WTC11 (cell line): ENCODE measurements at regions of chr10 and their contacts with region 1.

Region 1: DNA sequence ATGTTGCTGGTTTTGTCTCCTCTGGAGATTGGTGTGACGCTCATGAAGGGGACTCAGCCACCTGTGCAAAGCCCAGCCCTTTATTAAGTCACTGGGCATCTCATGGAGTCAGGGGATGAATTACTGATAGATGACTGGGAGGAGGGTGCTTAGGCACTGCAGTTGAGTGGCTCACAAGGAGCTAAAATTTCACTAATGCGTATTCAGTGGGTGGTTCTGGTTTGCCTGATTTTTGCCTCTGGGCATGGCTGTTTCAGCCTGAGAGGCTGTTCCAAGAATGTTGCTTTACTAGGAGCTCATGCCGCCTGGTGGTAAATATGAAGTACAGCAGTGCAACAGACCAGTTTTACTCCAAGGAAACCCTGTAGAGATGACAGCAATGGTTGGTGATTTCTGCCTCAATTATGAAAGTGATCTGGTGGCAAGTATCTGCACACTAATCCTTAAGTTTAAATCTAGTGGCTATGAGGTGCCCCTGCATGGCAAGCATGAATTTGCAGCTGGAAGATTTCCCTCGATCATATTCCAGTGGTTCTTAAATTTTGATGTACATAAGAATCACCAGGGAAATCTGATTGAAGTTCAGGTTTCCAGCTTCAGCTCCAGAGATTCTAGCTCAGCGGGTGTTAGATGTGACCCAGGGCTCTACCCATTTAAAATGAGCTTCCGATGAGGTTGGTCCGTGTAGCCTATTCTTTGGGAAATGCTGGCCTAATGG is 19.9 kb downstream of the ACTA2 start:
- DNase-seq: peak; percentile 53
- ATAC-seq: peak; percentile 88
- H3K4me3 Mint-ChIP-seq: no peak overlapping the region
- H3K27ac Mint-ChIP-seq: peak overlapping the region; percentile 79; the same call in 1 of the 2 replicates
- H3K4me1 Mint-ChIP-seq: peaks cover 13% of the 10 kb centered on the region
- H3K27me3 Mint-ChIP-seq: no peaks in the 10 kb centered on the region
- CTCF ChIP-seq: peak; percentile 75

Region 2: GRCh38 chr10:88835096-88835909 is 97.4 kb before region 1 on chr10:
- CTCF ChIA-PET with region 1: interaction called, 84 read pairs
- POLR2A ChIA-PET with region 1: no interaction called
- DNase-seq: peak; percentile 81
- ATAC-seq: peak; percentile 93
- H3K4me3 Mint-ChIP-seq: no peak overlapping the region
- H3K27ac Mint-ChIP-seq: no peak overlapping the region
- H3K4me1 Mint-ChIP-seq: no peaks in the 10 kb centered on the region
- H3K27me3 Mint-ChIP-seq: no peaks in the 10 kb centered on the region; the same call in 1 of the 2 replicates
- CTCF ChIP-seq: peak; percentile 70

Region 3: DNA sequence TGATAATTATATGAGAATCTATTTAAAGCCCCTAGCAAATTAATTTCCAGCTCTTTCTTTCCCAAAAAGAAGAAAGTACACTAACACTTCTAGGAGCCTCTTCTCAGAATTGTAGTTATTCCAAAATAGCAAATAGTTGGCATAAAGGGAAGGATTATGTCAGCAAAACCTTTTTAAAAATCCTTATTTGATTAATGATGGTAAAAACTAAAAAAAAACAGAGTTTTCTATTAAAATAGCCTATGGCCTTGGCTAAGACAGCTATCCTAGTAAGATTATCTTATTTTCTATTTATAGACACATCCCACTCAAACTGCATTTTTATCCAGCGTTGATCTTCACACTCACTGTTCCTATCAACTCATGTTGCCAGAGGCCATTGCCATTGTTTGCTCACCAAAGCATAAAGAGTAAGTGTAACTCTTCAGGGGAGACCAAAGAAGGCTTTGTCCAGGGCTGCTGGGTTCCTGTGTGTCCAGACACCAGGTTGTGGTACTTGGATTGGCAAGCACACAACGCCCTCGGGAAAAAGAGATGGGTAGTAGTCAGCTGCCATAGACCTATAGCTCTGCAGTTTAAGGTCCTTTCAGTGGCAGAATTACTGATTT is 11.6 kb before region 1 on chr10:
- CTCF ChIA-PET with region 1: interaction called, 13 read pairs
- POLR2A ChIA-PET with region 1: no interaction called
- DNase-seq: no peak
- ATAC-seq: no peak
- H3K4me3 Mint-ChIP-seq: no peak overlapping the region
- H3K27ac Mint-ChIP-seq: no peak overlapping the region
- H3K4me1 Mint-ChIP-seq: no peaks in the 10 kb centered on the region; the same call in 1 of the 2 replicates
- H3K27me3 Mint-ChIP-seq: no peaks in the 10 kb centered on the region
- CTCF ChIP-seq: no peak

Region 4: GRCh38 chr10:88990384-88991160 is 57.9 kb after region 1 on chr10 and contains the start of gene FAS:
- CTCF ChIA-PET with region 1: interaction called, 58 read pairs
- POLR2A ChIA-PET with region 1: interaction called, 3 read pairs
- DNase-seq: peak; percentile 51
- ATAC-seq: peak; percentile 76
- H3K4me3 Mint-ChIP-seq: peak within 1 kb of the TSS; percentile 88
- H3K27ac Mint-ChIP-seq: no peak within 1 kb of the TSS
- H3K4me1 Mint-ChIP-seq: peaks cover 31% of the 10 kb centered on the region
- H3K27me3 Mint-ChIP-seq: peaks cover 36% of the 10 kb centered on the region
- CTCF ChIP-seq: no peak
- total RNA-seq, gene FAS: 2.1 to 4.1 TPM (median 3.3 TPM) in 3 replicates

Region 5: GRCh38 chr10:89053555-89053954 is 120.9 kb after region 1 on chr10:
- CTCF ChIA-PET with region 1: no interaction called
- POLR2A ChIA-PET with region 1: no interaction called
- DNase-seq: no peak
- ATAC-seq: no peak
- H3K4me3 Mint-ChIP-seq: no peak overlapping the region
- H3K27ac Mint-ChIP-seq: no peak overlapping the region
- H3K4me1 Mint-ChIP-seq: peaks cover 11% of the 10 kb centered on the region
- H3K27me3 Mint-ChIP-seq: no peaks in the 10 kb centered on the region; the same call in 1 of the 2 replicates
- CTCF ChIP-seq: no peak

Region 6: DNA sequence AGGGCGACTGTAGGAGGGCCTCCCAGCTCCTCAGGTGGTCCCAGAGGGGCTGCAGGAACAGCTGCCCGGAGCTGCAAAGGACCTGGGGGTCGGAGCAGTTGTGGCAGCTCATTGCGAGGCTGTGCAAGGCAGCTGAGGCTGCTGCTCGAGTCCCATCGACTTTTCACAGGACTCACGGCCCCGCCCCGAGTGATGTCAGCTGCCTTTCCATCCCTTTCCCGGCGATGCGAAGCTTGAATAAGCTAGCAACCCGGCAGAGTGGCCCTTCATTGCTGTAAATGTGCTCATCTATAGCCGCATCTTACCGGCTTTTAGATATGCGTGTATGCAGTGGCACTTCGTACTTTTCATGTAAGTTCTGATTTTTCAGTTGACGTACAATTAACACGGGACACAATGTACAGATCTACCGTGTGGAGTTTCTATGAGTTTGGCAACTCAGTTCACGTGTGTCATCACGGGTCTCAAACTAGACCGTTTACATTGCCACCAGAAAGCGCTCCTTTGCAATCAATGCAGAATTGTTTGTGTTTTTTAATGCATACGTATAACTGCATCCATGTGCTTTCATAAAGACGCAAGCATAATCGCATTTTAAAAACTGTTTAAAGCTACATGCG is 274.6 kb after region 1 on chr10 and contains the start of gene CH25H:
- CTCF ChIA-PET with region 1: interaction called, 17 read pairs
- POLR2A ChIA-PET with region 1: no interaction called
- DNase-seq: peak; percentile 62
- ATAC-seq: peak; percentile 66
- H3K4me3 Mint-ChIP-seq: peak within 1 kb of the TSS; percentile 74
- H3K27ac Mint-ChIP-seq: no peak within 1 kb of the TSS
- H3K4me1 Mint-ChIP-seq: peaks cover 20% of the 10 kb centered on the region
- H3K27me3 Mint-ChIP-seq: peaks cover 4% of the 10 kb centered on the region; the same call in 1 of the 2 replicates
- CTCF ChIP-seq: no peak
- total RNA-seq, gene CH25H: 0.11 to 0.14 TPM in 2 of 3 replicates, not detected in the other

Region 7: GRCh38 chr10:89217057-89217990 is 284.6 kb after region 1 on chr10:
- CTCF ChIA-PET with region 1: interaction called, 14 read pairs
- POLR2A ChIA-PET with region 1: no interaction called
- DNase-seq: peak; percentile 53
- ATAC-seq: no peak
- H3K4me3 Mint-ChIP-seq: no peak overlapping the region
- H3K27ac Mint-ChIP-seq: no peak overlapping the region
- H3K4me1 Mint-ChIP-seq: peaks cover 17% of the 10 kb centered on the region
- H3K27me3 Mint-ChIP-seq: no peaks in the 10 kb centered on the region
- CTCF ChIP-seq: peak; percentile 67